Sigmoid colon (tissue), 7 donors: ENCODE measurements at regions of chr10 and their contacts with region 1.

Region 1: DNA sequence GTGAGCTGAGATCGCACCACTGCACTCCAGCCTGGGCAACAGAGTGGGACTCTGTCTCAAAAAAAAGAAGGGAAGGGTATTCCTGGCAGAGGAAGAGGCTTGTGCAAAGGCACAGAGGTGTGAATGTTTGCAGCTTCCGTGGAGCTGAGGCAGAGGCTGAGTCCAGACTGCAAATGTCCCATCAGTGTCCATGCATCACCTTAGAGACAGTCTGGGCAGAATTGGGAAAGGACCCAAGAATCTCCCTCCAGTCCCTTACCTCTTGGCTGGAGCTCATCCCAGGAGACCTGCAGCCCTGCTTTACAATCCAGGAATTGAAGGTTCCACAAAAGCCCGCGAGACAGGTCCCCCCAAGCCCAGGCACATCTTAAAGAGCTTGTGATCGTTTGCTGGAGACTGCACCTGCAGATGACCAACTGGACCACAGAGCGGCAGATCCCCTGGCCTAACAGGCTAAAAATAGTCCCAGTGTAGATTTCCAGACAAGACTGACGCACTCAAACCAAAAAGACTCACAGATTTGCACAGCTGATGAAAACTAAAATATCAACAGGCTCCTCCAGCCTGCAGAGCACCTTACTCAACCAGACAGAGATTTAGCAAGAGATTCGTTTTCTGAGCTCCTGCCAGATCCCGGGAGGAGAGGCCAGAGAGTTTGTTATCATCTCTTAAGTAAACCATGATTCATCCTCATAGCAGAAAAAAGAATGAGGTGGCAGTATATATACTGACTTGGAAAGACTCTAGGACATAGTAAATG is 22.9 kb upstream of the NANOS1 start:
- DNase-seq: peak; percentile 94
- H3K4me3 ChIP-seq: no peak overlapping the region
- H3K27ac ChIP-seq: peak overlapping the region; percentile 45 to 79 (median 75)
- H3K4me1 ChIP-seq: peaks cover 0 to 21% (median 16%) of the 10 kb centered on the region in 4 donors
- H3K27me3 ChIP-seq: no peaks in the 10 kb centered on the region
- CTCF ChIP-seq: peak in 1 of 4 experiments; percentile 14
- EP300 ChIP-seq: peak in 1 of 4 donors; percentile 41
- POLR2A ChIP-seq: no peak

Region 2: DNA sequence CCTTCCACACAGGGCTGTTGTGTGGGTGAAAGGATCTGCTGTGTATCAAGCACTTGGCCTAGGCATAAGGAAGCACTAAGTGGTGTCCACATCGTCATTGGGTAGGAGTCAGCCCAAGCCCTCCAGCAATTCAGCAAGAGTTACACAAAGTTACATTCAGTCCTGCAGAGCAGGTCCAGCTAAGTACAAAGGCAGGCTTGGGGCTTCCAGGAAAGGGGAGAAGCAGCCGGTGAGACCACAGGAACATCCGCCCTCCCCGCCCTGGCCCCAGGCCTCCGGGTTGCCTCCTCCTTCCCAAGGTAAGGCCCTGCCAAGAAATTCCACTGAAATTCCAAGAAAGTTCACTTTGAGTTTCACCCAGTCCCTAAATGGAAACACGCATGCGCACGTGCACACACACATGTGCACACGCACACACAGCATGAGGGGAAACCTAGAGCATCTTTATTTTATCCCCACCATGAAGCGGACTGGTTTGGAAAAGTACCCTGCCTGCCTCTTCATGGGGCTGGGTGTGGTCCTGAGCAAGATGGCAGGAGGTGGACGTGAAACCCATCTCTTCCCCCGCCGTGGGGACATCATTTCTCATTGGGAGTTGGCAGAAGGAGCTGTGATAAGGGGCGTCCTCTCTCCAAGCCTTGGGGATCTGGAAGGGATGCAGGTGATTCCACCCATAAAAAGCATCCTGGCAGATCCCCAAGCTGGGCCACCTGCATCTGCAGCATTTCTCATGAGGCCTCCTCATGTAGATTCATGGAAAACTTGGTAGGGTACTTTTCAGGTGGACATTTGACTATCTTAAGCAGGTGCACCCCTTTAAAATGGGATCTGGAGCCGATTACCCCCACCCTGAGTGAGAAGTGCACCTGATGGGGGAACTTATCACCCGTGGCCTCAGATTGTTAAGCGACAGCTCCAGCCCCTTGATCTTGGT is 46.2 kb before region 1 on chr10:
- intact Hi-C with region 1: loop called (anchors 5 kb)
- DNase-seq: no peak
- H3K4me3 ChIP-seq: no peak overlapping the region
- H3K27ac ChIP-seq: peak overlapping the region; percentile 17 to 67 (median 51)
- H3K4me1 ChIP-seq: peaks cover 0 to 27% (median 23%) of the 10 kb centered on the region in 4 donors
- H3K27me3 ChIP-seq: no peaks in the 10 kb centered on the region
- CTCF ChIP-seq: no peak
- EP300 ChIP-seq: no peak
- POLR2A ChIP-seq: no peak